ENCODE measurements at regions of chr1 and their contacts with region 1.

Region 1: GRCh38 chr1:119613769-119614720 is 34.0 kb downstream of the ZNF697 start:
- DNase-seq: peak; percentile 84 to 91 (median 90)
- ATAC-seq: peak; percentile 89 to 94
- H3K4me3 ChIP-seq: no peak overlapping the region
- H3K27ac ChIP-seq: no peak overlapping the region
- H3K4me1 ChIP-seq: no peaks in the 10 kb centered on the region
- H3K27me3 ChIP-seq: no peaks in the 10 kb centered on the region

Region 2: GRCh38 chr1:119564548-119564947 is 49.5 kb before region 1 on chr1:
- intact Hi-C with region 1: no loop called
- DNase-seq: no peak
- ATAC-seq: no peak
- H3K4me3 ChIP-seq: no peak overlapping the region
- H3K27ac ChIP-seq: no peak overlapping the region
- H3K4me1 ChIP-seq: peaks cover 4% of the 10 kb centered on the region
- H3K27me3 ChIP-seq: no peaks in the 10 kb centered on the region

Region 3: DNA sequence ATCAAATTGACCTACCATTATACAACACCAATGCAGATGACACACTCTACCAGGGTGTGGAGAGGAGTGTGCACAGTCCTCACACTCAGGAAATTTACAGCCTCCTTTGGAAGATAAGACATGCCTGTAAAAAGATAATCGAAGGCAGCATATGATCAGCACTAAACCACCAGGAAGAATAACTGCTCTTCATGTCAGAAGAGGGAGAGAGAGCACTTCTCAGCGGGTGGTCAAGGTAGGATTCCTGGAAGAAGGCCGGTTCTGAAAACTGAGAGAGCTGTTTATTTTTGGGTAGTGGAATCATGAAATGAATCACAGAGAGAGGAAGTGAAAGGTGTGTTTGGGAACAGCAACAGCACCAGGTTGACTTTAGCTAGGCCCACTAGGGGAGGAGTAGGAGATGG is 48.0 kb after region 1 on chr1:
- intact Hi-C with region 1: loop called (anchors 2 to 5 kb)
- DNase-seq: no peak
- ATAC-seq: no peak
- H3K4me3 ChIP-seq: no peak overlapping the region
- H3K27ac ChIP-seq: no peak overlapping the region
- H3K4me1 ChIP-seq: no peaks in the 10 kb centered on the region
- H3K27me3 ChIP-seq: no peaks in the 10 kb centered on the region

Region 4: GRCh38 chr1:119667173-119667572 is 53.1 kb after region 1 on chr1:
- intact Hi-C with region 1: loop called (anchors 2 to 5 kb)
- DNase-seq: no peak
- ATAC-seq: no peak
- H3K4me3 ChIP-seq: no peak overlapping the region
- H3K27ac ChIP-seq: no peak overlapping the region
- H3K4me1 ChIP-seq: no peaks in the 10 kb centered on the region
- H3K27me3 ChIP-seq: no peaks in the 10 kb centered on the region